ENCODE measurements at regions of chr6 and their contacts with region 1.

Region 1: GRCh38 chr6:26175428-26176181 is 88.4 kb downstream of the HFE start:
- DNase-seq: no peak
- H3K4me3 ChIP-seq: no peak overlapping the region
- H3K27ac ChIP-seq: no peak overlapping the region
- H3K4me1 ChIP-seq: peaks cover 0 to 2% of the 10 kb centered on the region in 2 donors
- H3K27me3 ChIP-seq: no peaks in the 10 kb centered on the region
- CTCF ChIP-seq: peak; percentile 35 to 78 (median 49)

Region 2: GRCh38 chr6:25942561-25943147 is 233.0 kb before region 1 on chr6:
- intact Hi-C with region 1: no loop called
- DNase-seq: no peak
- H3K4me3 ChIP-seq: no peak overlapping the region
- H3K27ac ChIP-seq: no peak overlapping the region
- H3K4me1 ChIP-seq: no peaks in the 10 kb centered on the region
- H3K27me3 ChIP-seq: no peaks in the 10 kb centered on the region
- CTCF ChIP-seq: peak in 2 of 3 experiments; percentile 38 to 60

Region 3: GRCh38 chr6:26115226-26115625 is 60.4 kb before region 1 on chr6:
- intact Hi-C with region 1: no loop called
- DNase-seq: no peak
- H3K4me3 ChIP-seq: no peak overlapping the region
- H3K27ac ChIP-seq: no peak overlapping the region
- H3K4me1 ChIP-seq: no peaks in the 10 kb centered on the region
- H3K27me3 ChIP-seq: no peaks in the 10 kb centered on the region
- CTCF ChIP-seq: no peak

Region 4: DNA sequence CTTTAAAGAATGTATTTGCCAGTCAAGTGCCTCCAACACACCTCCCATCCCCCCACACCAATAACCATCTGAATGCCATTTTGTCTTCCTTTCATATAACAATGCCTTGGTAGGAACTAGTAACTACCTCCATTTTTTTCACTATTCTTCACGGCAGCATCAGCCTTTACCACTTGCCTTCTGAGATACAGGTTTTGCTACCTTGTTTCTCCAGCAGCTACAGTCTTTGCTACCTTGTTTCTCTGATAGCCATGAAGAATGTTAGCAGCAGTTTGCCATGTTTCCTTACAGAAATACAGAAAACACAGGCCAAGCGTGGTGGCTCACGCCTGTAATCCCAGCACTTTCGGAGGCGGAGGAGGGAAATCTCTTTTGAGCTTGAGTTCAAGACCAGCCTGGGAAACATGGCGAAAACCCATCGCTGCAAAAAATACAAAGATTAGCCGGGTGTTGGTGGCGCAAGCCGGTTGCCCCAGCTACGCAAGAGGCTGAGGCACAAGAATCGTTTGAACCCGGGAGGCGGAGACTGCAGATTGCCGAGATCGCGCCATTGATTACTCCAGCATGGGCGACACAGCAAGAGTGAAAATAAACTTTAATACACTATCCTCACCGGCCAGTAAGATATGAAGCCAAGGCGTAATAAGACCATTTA is 12.5 kb after region 1 on chr6:
- intact Hi-C with region 1: loop called (anchors 2 kb)
- DNase-seq: peak in 1 of 2 donors; percentile 75
- H3K4me3 ChIP-seq: peak overlapping the region; percentile 57 to 79
- H3K27ac ChIP-seq: peak overlapping the region; percentile 85 to 89
- H3K4me1 ChIP-seq: peaks cover 4 to 13% of the 10 kb centered on the region in 2 donors
- H3K27me3 ChIP-seq: no peaks in the 10 kb centered on the region
- CTCF ChIP-seq: no peak

Region 5: DNA sequence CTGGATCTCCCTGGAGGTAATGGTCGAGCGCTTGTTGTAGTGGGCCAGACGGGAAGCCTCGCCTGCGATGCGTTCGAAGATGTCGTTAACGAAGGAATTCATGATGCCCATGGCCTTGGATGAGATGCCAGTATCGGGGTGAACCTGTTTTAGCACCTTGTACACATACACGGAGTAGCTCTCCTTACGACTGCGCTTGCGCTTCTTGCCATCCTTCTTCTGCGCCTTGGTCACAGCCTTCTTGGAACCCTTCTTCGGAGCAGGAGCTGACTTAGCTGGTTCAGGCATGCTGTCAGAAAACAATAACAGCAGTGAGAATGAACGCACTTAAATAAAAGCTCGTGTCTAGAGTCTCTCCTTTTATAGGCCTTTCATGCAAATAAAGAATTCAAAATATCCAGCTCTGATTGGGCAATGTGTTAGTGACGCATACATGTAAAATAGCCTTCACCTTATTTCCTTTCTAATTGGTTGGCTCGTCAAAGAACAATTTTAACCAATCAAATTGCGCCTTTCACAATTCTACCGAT is 40.8 kb after region 1 on chr6:
- intact Hi-C with region 1: loop called (anchors 5 kb)
- DNase-seq: peak in 1 of 2 donors; percentile 89
- H3K4me3 ChIP-seq: peak overlapping the region; percentile 55 to 64
- H3K27ac ChIP-seq: peak overlapping the region; percentile 90
- H3K4me1 ChIP-seq: peaks cover 0 to 11% of the 10 kb centered on the region in 2 donors
- H3K27me3 ChIP-seq: no peaks in the 10 kb centered on the region
- CTCF ChIP-seq: no peak

Region 6: DNA sequence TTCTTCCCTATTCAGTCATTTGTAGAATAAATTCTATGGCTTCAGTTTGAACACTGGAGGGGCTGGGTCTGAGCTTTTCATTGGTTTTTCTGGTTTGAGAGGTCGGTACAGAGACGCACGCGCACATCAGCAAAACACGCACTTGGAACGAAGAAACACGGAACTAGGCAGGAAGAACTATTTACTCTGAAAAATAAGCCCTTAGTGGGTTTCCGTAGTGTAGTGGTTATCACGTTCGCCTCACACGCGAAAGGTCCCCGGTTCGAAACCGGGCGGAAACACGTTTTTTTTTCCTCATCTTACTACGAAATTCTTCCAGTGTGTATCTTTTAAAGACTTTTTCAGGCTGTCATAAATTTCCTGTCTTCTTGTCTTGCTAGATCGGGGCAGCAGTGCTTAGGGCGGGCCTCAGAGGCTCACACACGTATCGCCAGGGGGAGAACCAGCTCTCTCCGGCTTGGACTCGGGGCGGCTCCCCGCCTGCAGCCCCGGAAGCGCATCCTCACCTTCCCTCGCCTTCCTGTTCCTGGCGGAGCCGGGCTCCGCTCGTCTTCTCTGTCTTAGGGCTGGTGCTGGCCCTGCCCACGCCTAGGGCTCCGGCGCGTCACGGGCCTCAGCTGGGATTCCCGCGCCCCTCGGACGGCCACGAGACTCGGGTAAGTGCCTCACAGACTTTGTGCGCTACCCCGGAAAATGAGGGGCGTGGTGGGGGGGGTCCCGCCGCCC is 362.4 kb after region 1 on chr6 and contains the start of gene HMGN4:
- intact Hi-C with region 1: loop called (anchors 10 kb)
- DNase-seq: peak in 1 of 2 donors; percentile 90
- H3K4me3 ChIP-seq: peak within 1 kb of the TSS; percentile 89 to 98
- H3K27ac ChIP-seq: peak within 1 kb of the TSS; percentile 92 to 99
- H3K4me1 ChIP-seq: peaks cover 5 to 32% of the 10 kb centered on the region in 2 donors
- H3K27me3 ChIP-seq: no peaks in the 10 kb centered on the region
- CTCF ChIP-seq: peak in 1 of 3 experiments; percentile 12
- total RNA-seq, gene HMGN4: 20.6 TPM